Heart left ventricle (tissue), 16 donors: ENCODE measurements at regions of chr13 and their contacts with region 1.

Region 1: GRCh38 chr13:82356667-82357410 is 1525.4 kb downstream of the SLITRK1 start:
- DNase-seq: no peak
- ATAC-seq: no peak
- H3K4me3 ChIP-seq: no peak overlapping the region
- H3K27ac ChIP-seq: no peak overlapping the region
- H3K4me1 ChIP-seq: no peaks in the 10 kb centered on the region
- H3K27me3 ChIP-seq: no peaks in the 10 kb centered on the region
- CTCF ChIP-seq: no peak
- POLR2A ChIP-seq: no peak

Region 2: DNA sequence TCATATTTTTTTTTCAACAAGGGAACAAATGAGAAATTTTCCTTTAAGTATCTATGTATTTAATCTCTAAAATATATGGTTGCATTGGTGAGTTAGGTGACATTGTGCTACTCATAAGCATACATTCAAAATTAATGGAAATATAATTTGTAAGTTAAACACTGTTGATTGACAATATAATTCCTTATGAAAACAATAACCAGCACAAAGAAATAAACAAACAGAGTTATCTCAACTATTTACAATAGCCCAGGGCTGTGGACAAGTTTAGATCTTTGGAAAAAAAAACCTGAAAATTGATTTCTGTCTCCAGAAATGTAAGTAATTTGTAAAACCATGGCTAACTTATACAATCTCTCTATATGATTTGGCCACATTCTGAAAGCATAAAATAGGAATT is 87.5 kb before region 1 on chr13:
- intact Hi-C with region 1: no loop called
- DNase-seq: no peak
- ATAC-seq: no peak
- H3K4me3 ChIP-seq: no peak overlapping the region
- H3K27ac ChIP-seq: no peak overlapping the region
- H3K4me1 ChIP-seq: no peaks in the 10 kb centered on the region
- H3K27me3 ChIP-seq: no peaks in the 10 kb centered on the region
- CTCF ChIP-seq: no peak
- POLR2A ChIP-seq: no peak

Region 3: GRCh38 chr13:82285162-82285561 is 71.7 kb before region 1 on chr13:
- intact Hi-C with region 1: loop called in 1 of 10 experiments (anchors 5 kb)
- DNase-seq: no peak
- ATAC-seq: no peak
- H3K4me3 ChIP-seq: no peak overlapping the region
- H3K27ac ChIP-seq: no peak overlapping the region
- H3K4me1 ChIP-seq: no peaks in the 10 kb centered on the region
- H3K27me3 ChIP-seq: no peaks in the 10 kb centered on the region
- CTCF ChIP-seq: no peak
- POLR2A ChIP-seq: no peak